ENCODE measurements at regions of chr2 and their contacts with region 1.

Region 1: GRCh38 chr2:216535454-216535995 is 36.9 kb downstream of the RPL37A start:
- DNase-seq: peak; percentile 70 to 81 (median 79)
- ATAC-seq: peak; percentile 71 to 89 (median 81)
- H3K4me3 ChIP-seq: peak overlapping the region in 2 of 12 donors; percentile 2 to 14
- H3K27ac ChIP-seq: peak overlapping the region; percentile 79 to 91 (median 87)
- H3K4me1 ChIP-seq: peaks cover 18 to 72% (median 49%) of the 10 kb centered on the region in 12 donors
- H3K27me3 ChIP-seq: no peaks in the 10 kb centered on the region
- CTCF ChIP-seq: no peak
- POLR2A ChIP-seq: peak in 1 of 2 donors; percentile 21

Region 2: DNA sequence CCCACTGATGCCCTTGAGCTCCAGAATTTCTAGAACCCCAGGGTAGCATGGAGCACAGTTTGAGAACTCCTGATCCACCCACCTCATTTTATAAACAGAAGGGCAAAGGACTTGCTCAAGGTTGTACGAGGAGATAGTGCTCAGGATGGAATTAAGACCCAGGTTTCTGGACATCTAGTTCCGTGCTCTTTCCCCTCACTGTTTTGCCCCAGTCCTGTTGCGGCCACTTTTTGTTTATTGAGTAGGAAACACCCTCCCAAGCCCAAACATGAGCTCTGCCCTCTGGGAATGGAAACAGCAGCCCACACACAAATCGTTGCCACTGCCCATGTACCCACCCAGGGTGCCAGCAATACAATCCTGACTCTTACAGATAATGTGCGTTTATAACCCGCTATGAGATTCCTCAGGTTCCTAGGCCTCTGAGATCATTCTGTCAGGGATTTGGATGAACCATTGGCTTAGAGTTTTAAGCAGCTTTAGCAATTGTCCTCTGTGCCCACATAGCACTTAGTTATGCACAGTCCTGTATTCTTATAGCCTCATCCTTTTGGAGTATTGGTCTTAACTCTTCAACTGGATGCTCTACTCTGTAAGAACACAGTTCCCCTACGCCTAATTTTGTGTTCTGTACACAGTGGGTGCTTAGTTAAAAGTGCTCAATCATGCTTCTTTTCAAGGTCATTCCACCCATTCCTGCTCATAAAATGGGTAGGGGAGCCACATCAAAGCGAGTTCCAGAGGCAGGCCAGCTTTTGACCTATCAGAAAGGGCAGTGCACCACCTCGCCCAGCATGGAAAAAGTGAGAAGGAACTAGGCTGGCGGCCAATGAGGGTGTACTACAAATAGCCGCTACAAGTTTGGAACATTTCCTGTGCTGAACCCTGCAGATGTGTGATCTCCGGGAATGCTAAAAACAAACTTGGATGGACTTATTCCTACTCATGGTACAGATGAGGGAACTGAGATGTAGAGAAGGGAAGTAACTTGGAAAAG is 37.4 kb after region 1 on chr2:
- intact Hi-C with region 1: loop called in 5 of 10 experiments (anchors 5 kb)
- DNase-seq: peak; percentile 83 to 94 (median 92)
- ATAC-seq: peak; percentile 92 to 98 (median 94)
- H3K4me3 ChIP-seq: no peak overlapping the region
- H3K27ac ChIP-seq: peak overlapping the region; percentile 35 to 92 (median 86)
- H3K4me1 ChIP-seq: peaks cover 8 to 47% (median 20%) of the 10 kb centered on the region in 12 donors
- H3K27me3 ChIP-seq: no peaks in the 10 kb centered on the region
- CTCF ChIP-seq: no peak
- POLR2A ChIP-seq: no peak

Region 3: GRCh38 chr2:216590780-216591179 is 55.3 kb after region 1 on chr2:
- intact Hi-C with region 1: loop called in 3 of 10 experiments (anchors 5 to 10 kb)
- DNase-seq: peak; percentile 25 to 74 (median 66)
- ATAC-seq: peak; percentile 74 to 90 (median 84)
- H3K4me3 ChIP-seq: no peak overlapping the region
- H3K27ac ChIP-seq: peak overlapping the region in 1 of 12 donors; percentile 8
- H3K4me1 ChIP-seq: peaks cover 0 to 28% (median 13%) of the 10 kb centered on the region in 12 donors
- H3K27me3 ChIP-seq: no peaks in the 10 kb centered on the region
- CTCF ChIP-seq: peak in 2 of 12 donors; percentile 32 to 38
- POLR2A ChIP-seq: no peak

Region 4: DNA sequence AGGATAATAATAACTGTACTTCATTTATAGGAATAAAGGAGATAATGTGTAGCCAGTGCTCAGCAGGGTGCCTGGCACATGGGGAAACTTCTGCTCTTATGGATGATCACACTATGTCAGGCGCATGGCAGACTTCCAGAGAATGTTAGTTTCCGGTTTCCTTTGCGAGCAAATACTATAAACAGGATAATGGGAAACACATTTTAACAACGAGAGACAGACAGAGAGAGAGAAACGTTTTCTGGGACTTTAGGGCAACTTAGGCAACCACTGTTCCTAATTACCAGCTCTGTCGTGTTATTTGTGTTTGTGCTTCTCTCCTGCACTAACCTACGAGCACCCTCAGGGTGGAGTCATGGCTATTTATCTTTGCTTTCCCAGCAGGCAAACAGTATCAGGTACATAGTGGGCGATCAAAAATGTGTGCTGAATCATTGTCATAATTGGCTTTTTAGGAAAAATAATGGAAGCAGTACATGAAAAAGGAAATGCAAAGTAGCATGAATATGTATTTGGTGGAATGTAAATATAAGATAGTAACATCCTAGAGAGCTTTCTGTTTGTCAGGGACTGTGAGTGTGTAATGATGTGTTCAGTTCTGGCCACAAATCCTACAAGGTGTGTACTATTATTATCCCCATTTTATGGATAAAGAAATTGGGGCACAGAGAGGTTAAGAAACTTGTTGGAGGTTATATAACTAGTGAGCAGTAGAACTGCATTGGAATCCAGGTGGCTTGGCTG is 60.9 kb after region 1 on chr2:
- intact Hi-C with region 1: loop called in 3 of 10 experiments (anchors 5 to 10 kb)
- DNase-seq: peak in 3 of 5 donors; percentile 31 to 50 (median 35)
- ATAC-seq: peak in 2 of 4 donors; percentile 33 to 61
- H3K4me3 ChIP-seq: no peak overlapping the region
- H3K27ac ChIP-seq: peak overlapping the region in 1 of 12 donors; percentile 26
- H3K4me1 ChIP-seq: peaks cover 0 to 25% (median 14%) of the 10 kb centered on the region in 12 donors
- H3K27me3 ChIP-seq: no peaks in the 10 kb centered on the region
- CTCF ChIP-seq: no peak
- POLR2A ChIP-seq: no peak

Region 5: DNA sequence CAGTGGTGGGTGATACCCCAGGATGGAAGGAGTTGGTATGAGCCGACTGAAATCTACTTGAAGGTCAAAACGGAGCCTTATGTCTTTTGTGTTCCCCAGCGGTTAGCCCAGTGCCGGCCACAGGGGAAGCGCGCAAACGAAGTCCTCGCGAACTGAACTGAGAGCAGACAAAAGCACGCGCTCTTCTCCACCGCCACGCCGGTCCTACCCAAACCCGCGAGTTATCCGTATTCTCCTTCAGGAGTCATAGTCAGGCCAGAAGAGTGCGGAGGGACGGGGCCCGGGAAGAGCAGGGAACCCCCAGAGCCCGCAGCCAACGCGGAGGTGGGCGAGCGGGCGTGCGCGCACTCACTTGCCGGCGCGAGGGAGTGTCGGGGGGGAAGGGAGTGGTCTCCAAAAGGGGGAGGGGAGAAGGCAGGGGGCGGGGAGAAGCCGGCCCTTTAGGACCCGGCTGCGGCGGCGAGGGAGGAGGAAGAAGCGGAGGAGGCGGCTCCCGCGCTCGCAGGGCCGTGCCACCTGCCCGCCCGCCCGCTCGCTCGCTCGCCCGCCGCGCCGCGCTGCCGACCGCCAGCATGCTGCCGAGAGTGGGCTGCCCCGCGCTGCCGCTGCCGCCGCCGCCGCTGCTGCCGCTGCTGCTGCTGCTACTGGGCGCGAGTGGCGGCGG is 97.6 kb after region 1 on chr2 and contains the start of gene IGFBP2:
- intact Hi-C with region 1: loop called in 2 of 10 experiments (anchors 5 kb)
- DNase-seq: peak; percentile 53 to 72 (median 62)
- ATAC-seq: peak in 3 of 4 donors; percentile 56 to 76 (median 65)
- H3K4me3 ChIP-seq: peak within 1 kb of the TSS; percentile 28 to 88 (median 66)
- H3K27ac ChIP-seq: peak within 1 kb of the TSS in 8 of 12 donors; percentile 22 to 66 (median 46)
- H3K4me1 ChIP-seq: peaks cover 0 to 52% (median 27%) of the 10 kb centered on the region in 12 donors
- H3K27me3 ChIP-seq: peaks cover 0 to 28% (median 0%) of the 10 kb centered on the region in 9 donors
- CTCF ChIP-seq: peak in 1 of 12 donors; percentile 7
- POLR2A ChIP-seq: no peak
- total RNA-seq, gene IGFBP2: 57.2 to 326 (median 113) TPM

Region 6: DNA sequence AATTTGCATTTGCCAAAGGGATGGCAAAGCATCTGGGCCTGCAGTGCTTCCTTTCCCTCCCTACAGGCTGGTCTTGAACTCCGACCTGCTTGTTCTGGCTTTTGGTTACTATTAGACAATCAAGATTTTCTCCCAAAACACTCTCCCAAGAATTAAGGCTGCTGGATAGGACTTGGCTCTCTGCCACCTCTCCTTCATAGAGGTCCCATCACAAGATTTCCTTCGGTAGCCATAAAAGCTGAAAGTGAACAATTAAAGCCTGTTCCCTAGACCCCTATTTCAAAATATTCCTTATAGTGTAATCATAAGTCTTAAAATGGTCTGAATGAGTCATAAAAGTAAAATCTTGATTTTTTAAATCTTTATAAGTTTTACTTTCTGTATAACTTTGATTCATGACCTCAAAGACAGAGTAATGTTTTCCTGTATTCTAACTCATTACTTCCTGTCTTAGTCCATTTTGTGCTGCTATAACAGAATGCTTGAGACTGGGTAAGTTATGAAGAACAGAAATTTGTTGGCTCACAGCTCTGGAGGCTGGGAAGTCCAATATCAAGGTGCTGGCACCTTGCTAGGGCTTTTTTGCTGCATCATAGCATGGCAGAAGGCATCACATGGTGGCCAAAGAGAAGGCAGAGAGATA is 362.2 kb after region 1 on chr2:
- intact Hi-C with region 1: no loop called
- DNase-seq: no peak
- ATAC-seq: no peak
- H3K4me3 ChIP-seq: no peak overlapping the region
- H3K27ac ChIP-seq: no peak overlapping the region
- H3K4me1 ChIP-seq: no peaks in the 10 kb centered on the region
- H3K27me3 ChIP-seq: no peaks in the 10 kb centered on the region
- CTCF ChIP-seq: no peak
- POLR2A ChIP-seq: no peak

Measured in heart left ventricle (tissue), 16 donors.